ENCODE measurements at regions of chr2 and their contacts with region 1.

Region 1: GRCh38 chr2:46062637-46063412 is 234.4 kb upstream of the EPAS1 start:
- DNase-seq: peak; percentile 80 to 92 (median 86)
- ATAC-seq: peak; percentile 76 to 86
- H3K4me3 ChIP-seq: no peak overlapping the region
- H3K27ac ChIP-seq: no peak overlapping the region
- H3K4me1 ChIP-seq: peaks cover 5% of the 10 kb centered on the region
- H3K27me3 ChIP-seq: no peaks in the 10 kb centered on the region

Region 2: GRCh38 chr2:46010925-46011490 is 51.8 kb before region 1 on chr2:
- intact Hi-C with region 1: loop called in 1 of 4 experiments (anchors 5 kb)
- DNase-seq: no peak
- ATAC-seq: peak; percentile 38 to 42
- H3K4me3 ChIP-seq: no peak overlapping the region
- H3K27ac ChIP-seq: no peak overlapping the region
- H3K4me1 ChIP-seq: peaks cover 7% of the 10 kb centered on the region
- H3K27me3 ChIP-seq: no peaks in the 10 kb centered on the region

Region 3: DNA sequence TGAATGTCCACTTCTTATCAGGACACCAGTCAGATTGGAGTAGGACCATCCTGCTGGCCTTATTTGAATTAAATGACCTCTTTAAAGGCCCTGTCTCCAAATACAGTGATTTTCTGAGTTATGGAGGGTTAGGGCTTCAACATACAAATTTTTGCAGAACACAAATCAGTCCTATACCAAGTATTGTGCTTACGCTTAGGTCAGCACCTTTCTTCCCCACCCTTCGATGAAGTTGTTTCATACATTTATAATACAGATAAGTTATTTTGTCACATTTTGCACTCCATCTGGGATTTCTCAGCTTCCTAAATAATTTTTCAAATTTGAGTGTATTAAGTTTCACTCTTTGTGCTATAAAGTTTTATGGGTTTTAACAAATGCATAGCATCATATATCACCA is 43.9 kb after region 1 on chr2:
- intact Hi-C with region 1: no loop called
- DNase-seq: no peak
- ATAC-seq: no peak
- H3K4me3 ChIP-seq: no peak overlapping the region
- H3K27ac ChIP-seq: no peak overlapping the region
- H3K4me1 ChIP-seq: no peaks in the 10 kb centered on the region
- H3K27me3 ChIP-seq: no peaks in the 10 kb centered on the region

Region 4: DNA sequence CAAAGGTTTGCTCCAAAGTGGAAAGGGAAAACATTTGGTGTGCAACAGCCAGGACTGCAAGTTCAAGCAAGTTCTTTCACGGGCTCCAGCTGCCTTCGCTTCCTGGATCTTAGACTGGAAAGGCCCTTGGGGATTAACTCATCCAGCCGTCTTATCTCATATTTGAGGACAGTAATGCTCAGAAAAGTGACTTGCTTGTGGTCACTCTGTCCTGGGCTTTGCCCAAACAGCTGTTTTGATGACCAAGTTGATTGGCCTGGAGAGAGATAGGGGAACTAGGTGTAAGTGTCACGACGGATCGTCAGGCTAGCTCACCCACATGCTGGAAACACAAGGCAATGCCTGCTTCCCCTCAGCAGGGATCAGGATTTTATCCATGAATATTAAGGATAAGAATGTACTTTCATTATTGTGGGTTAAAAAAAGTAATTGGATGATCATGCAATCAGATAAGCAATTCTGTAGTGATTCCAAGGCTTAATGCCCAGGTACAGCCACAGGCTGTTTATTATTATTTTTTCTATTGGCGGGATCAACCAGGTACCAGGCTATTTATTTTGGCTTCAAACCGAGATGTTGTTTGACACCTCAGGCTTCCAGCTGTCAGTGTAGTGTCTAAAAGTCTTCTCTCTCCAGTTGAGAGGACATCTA is 71.8 kb after region 1 on chr2:
- intact Hi-C with region 1: loop called in 1 of 4 experiments (anchors 10 kb)
- DNase-seq: peak in 2 of 3 donors; percentile 47 to 83
- ATAC-seq: peak; percentile 64 to 67
- H3K4me3 ChIP-seq: no peak overlapping the region
- H3K27ac ChIP-seq: peak overlapping the region; percentile 91
- H3K4me1 ChIP-seq: peaks cover 19% of the 10 kb centered on the region
- H3K27me3 ChIP-seq: no peaks in the 10 kb centered on the region

Region 5: DNA sequence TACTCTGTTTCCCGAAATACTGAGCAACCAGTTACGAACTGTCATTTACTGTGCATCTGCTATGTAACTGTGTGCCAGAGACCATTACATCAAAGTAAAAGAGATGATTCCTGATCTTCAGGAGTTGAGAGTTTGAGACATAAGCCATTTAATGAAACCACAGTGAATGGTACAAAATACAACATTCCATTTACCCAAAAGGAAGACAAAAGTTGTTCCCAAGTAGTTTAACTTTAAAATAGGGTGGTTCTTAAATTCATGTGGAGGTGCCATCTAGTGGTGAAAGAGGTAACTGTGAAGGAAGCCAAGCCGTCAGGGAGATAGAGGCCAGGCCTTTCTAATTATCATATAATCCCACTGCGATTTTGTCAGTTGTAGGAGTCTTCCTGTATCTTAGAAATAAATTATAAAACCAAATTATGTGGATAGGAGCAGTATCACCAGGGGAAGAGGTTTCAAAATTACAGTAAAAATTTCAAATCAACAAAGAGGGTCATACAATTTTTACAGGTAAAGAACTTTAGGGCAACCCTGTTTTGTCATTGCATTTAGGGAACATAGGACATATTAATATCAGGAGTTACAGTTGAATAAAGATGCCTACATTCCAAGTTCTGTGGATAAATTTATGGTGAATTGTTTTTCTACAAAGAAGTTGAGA is 302.1 kb after region 1 on chr2:
- intact Hi-C with region 1: loop called in 1 of 4 experiments (anchors 10 kb)
- DNase-seq: no peak
- ATAC-seq: peak in 1 of 2 donors; percentile 44
- H3K4me3 ChIP-seq: no peak overlapping the region
- H3K27ac ChIP-seq: no peak overlapping the region
- H3K4me1 ChIP-seq: peaks cover 2% of the 10 kb centered on the region
- H3K27me3 ChIP-seq: no peaks in the 10 kb centered on the region

Measured in right cardiac atrium (tissue), 5 donors.